K562 (cell line): ENCODE measurements at regions of chrX and their contacts with region 1.

Region 1: GRCh38 chrX:65522739-65523372 is 11.7 kb downstream of the LAS1L start:
- DNase-seq: no peak
- ATAC-seq: no peak
- H3K4me3 ChIP-seq: no peak overlapping the region
- H3K27ac ChIP-seq: no peak overlapping the region
- H3K4me1 ChIP-seq: no peaks in the 10 kb centered on the region
- H3K27me3 ChIP-seq: no peaks in the 10 kb centered on the region
- CTCF ChIP-seq: no peak
- EP300 ChIP-seq: no peak
- POLR2A ChIP-seq: no peak
- RAD21 ChIP-seq: no peak

Region 2: DNA sequence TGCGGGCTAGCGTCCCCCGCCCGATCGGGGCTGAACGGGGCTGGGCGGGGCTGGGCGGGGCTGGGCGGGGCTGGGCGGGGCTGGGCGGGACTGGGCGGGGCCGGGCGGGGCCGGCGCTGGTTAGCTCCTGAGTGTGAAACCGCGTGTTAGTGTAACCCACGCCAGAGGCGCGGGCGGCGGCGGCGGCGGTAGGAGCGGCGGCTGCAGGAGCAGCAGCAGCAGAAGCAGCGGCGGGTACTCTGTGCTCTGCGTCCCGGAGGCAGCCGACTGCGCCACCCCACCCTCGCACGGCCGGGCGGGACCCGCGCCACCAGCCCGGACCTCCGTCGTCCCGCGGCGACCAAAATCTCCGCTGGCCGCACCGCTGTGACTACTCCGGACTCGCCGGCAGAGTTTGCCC is 116.3 kb before region 1 on chrX:
- CTCF ChIA-PET with region 1: no interaction called
- POLR2A ChIA-PET with region 1: no interaction called
- in situ Hi-C with region 1: no loop called
- intact Hi-C with region 1: no loop called
- DNase-seq: no peak
- ATAC-seq: no peak
- H3K4me3 ChIP-seq: no peak overlapping the region
- H3K27ac ChIP-seq: no peak overlapping the region
- H3K4me1 ChIP-seq: no peaks in the 10 kb centered on the region
- H3K27me3 ChIP-seq: no peaks in the 10 kb centered on the region
- CTCF ChIP-seq: no peak
- EP300 ChIP-seq: no peak
- POLR2A ChIP-seq: no peak
- RAD21 ChIP-seq: no peak

Region 3: GRCh38 chrX:65502618-65503017 is 20.2 kb before region 1 on chrX:
- CTCF ChIA-PET with region 1: no interaction called
- POLR2A ChIA-PET with region 1: interaction called, 3 read pairs
- in situ Hi-C with region 1: no loop called
- intact Hi-C with region 1: loop called (anchors 2 kb)
- DNase-seq: no peak
- ATAC-seq: no peak
- H3K4me3 ChIP-seq: no peak overlapping the region
- H3K27ac ChIP-seq: no peak overlapping the region
- H3K4me1 ChIP-seq: no peaks in the 10 kb centered on the region
- H3K27me3 ChIP-seq: no peaks in the 10 kb centered on the region
- CTCF ChIP-seq: no peak
- EP300 ChIP-seq: no peak
- POLR2A ChIP-seq: no peak
- RAD21 ChIP-seq: no peak